Caco-2 (cell line): ENCODE measurements at regions of chr12 and their contacts with region 1.

Region 1: GRCh38 chr12:128387811-128388422 is 120.9 kb downstream of the TMEM132C start:
- DNase-seq: peak; percentile 46
- H3K4me3 ChIP-seq: no peak overlapping the region
- H3K4me3 Mint-ChIP-seq: no peak overlapping the region
- H3K27ac Mint-ChIP-seq: no peak overlapping the region
- H3K4me1 ChIP-seq: no peaks in the 10 kb centered on the region
- H3K4me1 Mint-ChIP-seq: no peaks in the 10 kb centered on the region
- H3K27me3 ChIP-seq: no peaks in the 10 kb centered on the region
- H3K27me3 Mint-ChIP-seq: peaks cover 5% of the 10 kb centered on the region
- CTCF ChIP-seq: peak; percentile 11 to 51

Region 2: GRCh38 chr12:128259556-128260070 is 128.3 kb before region 1 on chr12:
- CTCF ChIA-PET with region 1: interaction called, 10 read pairs
- POLR2A ChIA-PET with region 1: no interaction called
- intact Hi-C with region 1: no loop called
- DNase-seq: peak in 1 of 2 experiments; percentile 9
- H3K4me3 ChIP-seq: no peak overlapping the region
- H3K4me3 Mint-ChIP-seq: no peak overlapping the region
- H3K27ac Mint-ChIP-seq: no peak overlapping the region
- H3K4me1 ChIP-seq: no peaks in the 10 kb centered on the region
- H3K4me1 Mint-ChIP-seq: no peaks in the 10 kb centered on the region
- H3K27me3 ChIP-seq: no peaks in the 10 kb centered on the region
- H3K27me3 Mint-ChIP-seq: peaks cover 2% of the 10 kb centered on the region
- CTCF ChIP-seq: peak; percentile 36 to 72

Region 3: GRCh38 chr12:128449261-128449868 is 61.4 kb after region 1 on chr12:
- CTCF ChIA-PET with region 1: no interaction called
- POLR2A ChIA-PET with region 1: no interaction called
- intact Hi-C with region 1: no loop called
- DNase-seq: no peak
- H3K4me3 ChIP-seq: no peak overlapping the region
- H3K4me3 Mint-ChIP-seq: no peak overlapping the region
- H3K27ac Mint-ChIP-seq: no peak overlapping the region
- H3K4me1 ChIP-seq: no peaks in the 10 kb centered on the region
- H3K4me1 Mint-ChIP-seq: no peaks in the 10 kb centered on the region
- H3K27me3 ChIP-seq: no peaks in the 10 kb centered on the region
- H3K27me3 Mint-ChIP-seq: no peaks in the 10 kb centered on the region
- CTCF ChIP-seq: no peak